Mammary epithelial cell (primary cell): ENCODE measurements at regions of chr7 and their contacts with region 1.

Region 1: GRCh38 chr7:31883761-31884164 is 186.4 kb downstream of the PDE1C start:
- DNase-seq: peak; percentile 91
- H3K4me3 ChIP-seq: peak overlapping the region in 1 of 3 experiments; percentile 4
- H3K27ac ChIP-seq: peak overlapping the region; percentile 81
- H3K4me1 ChIP-seq: peaks cover 27% of the 10 kb centered on the region
- H3K27me3 ChIP-seq: no peaks in the 10 kb centered on the region
- CTCF ChIP-seq: no peak

Region 2: DNA sequence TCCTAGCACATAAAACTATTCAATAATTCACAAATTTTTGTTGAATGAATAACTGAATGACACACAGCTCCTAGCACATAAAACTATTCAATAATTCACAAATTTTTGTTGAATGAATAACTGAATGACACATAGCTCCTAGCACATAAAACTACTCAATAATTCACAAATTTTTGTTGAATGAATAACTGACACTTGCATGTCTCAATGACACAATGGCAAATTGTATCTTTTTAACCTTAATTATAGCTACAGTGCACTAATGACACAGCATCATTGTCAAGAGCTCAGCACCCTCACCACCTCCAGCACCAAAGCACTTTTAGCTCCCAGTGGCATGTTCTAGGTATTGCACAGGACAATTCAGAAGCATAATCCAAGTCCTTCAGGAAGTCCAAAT is 54.9 kb after region 1 on chr7:
- CTCF ChIA-PET with region 1: interaction called, 6 read pairs
- dilution Hi-C with region 1: loop called (anchors 5 kb)
- in situ Hi-C with region 1: no loop called
- intact Hi-C with region 1: loop called (anchors 2 kb)
- DNase-seq: peak; percentile 77
- H3K4me3 ChIP-seq: no peak overlapping the region
- H3K27ac ChIP-seq: peak overlapping the region; percentile 55
- H3K4me1 ChIP-seq: peaks cover 68% of the 10 kb centered on the region
- H3K27me3 ChIP-seq: no peaks in the 10 kb centered on the region
- CTCF ChIP-seq: peak; percentile 47 to 56

Region 3: GRCh38 chr7:32043714-32044113 is 160.0 kb after region 1 on chr7:
- CTCF ChIA-PET with region 1: no interaction called
- dilution Hi-C with region 1: no loop called
- in situ Hi-C with region 1: no loop called
- intact Hi-C with region 1: loop called (anchors 5 kb)
- DNase-seq: no peak
- H3K4me3 ChIP-seq: no peak overlapping the region
- H3K27ac ChIP-seq: no peak overlapping the region
- H3K4me1 ChIP-seq: no peaks in the 10 kb centered on the region
- H3K27me3 ChIP-seq: no peaks in the 10 kb centered on the region
- CTCF ChIP-seq: no peak